ENCODE measurements at regions of chr4 and their contacts with region 1.

Region 1: GRCh38 chr4:182806259-182807252 is 110.6 kb downstream of the DCTD start:
- DNase-seq: peak in 8 of 9 experiments; percentile 31 to 74 (median 64)
- ATAC-seq: peak; percentile 43
- H3K4me3 ChIP-seq: peak overlapping the region; percentile 36
- H3K4me3 Mint-ChIP-seq: peak overlapping the region; percentile 70
- H3K27ac ChIP-seq: no peak overlapping the region
- H3K27ac Mint-ChIP-seq: no peak overlapping the region
- H3K4me1 ChIP-seq: peaks cover 21% of the 10 kb centered on the region
- H3K4me1 Mint-ChIP-seq: peaks cover 15% of the 10 kb centered on the region
- H3K27me3 ChIP-seq: peaks cover 0 to 6% of the 10 kb centered on the region in 2 experiments
- H3K27me3 Mint-ChIP-seq: peaks cover 8% of the 10 kb centered on the region
- CTCF ChIP-seq: peak; percentile 56

Region 2: GRCh38 chr4:182478475-182478874 is 328.1 kb before region 1 on chr4:
- CTCF ChIA-PET with region 1: no interaction called
- POLR2A ChIA-PET with region 1: no interaction called
- intact Hi-C with region 1: loop called (anchors 5 kb)
- DNase-seq: peak in 2 of 9 experiments; percentile 21 to 38
- ATAC-seq: no peak
- H3K4me3 ChIP-seq: no peak overlapping the region
- H3K4me3 Mint-ChIP-seq: no peak overlapping the region
- H3K27ac ChIP-seq: no peak overlapping the region
- H3K27ac Mint-ChIP-seq: no peak overlapping the region
- H3K4me1 ChIP-seq: no peaks in the 10 kb centered on the region
- H3K4me1 Mint-ChIP-seq: no peaks in the 10 kb centered on the region
- H3K27me3 ChIP-seq: no peaks in the 10 kb centered on the region
- H3K27me3 Mint-ChIP-seq: no peaks in the 10 kb centered on the region
- CTCF ChIP-seq: peak; percentile 78

Region 3: DNA sequence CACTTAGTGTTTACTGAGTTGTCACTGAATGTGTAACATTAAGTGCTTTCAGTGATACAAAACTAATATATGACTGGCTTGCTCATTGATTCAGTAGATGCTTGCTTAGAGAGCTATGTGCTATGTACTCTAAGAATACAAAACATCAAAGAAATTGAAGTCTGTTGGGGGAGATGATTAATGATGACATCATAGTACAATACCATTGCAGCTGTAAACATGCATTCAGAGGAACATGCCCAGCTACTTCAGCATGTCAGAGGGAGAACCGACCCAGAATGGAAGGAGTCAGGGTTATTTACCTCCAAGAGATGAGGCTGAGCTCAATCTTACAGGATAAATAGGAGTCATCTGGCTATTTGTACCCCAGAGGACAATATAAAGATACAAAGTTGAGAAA is 272.6 kb before region 1 on chr4:
- CTCF ChIA-PET with region 1: no interaction called
- POLR2A ChIA-PET with region 1: no interaction called
- intact Hi-C with region 1: no loop called
- DNase-seq: no peak
- ATAC-seq: no peak
- H3K4me3 ChIP-seq: no peak overlapping the region
- H3K4me3 Mint-ChIP-seq: no peak overlapping the region
- H3K27ac ChIP-seq: no peak overlapping the region
- H3K27ac Mint-ChIP-seq: no peak overlapping the region
- H3K4me1 ChIP-seq: no peaks in the 10 kb centered on the region
- H3K4me1 Mint-ChIP-seq: no peaks in the 10 kb centered on the region
- H3K27me3 ChIP-seq: no peaks in the 10 kb centered on the region
- H3K27me3 Mint-ChIP-seq: peaks cover 4% of the 10 kb centered on the region
- CTCF ChIP-seq: no peak

Region 4: GRCh38 chr4:183504064-183504929 is 697.7 kb after region 1 on chr4:
- CTCF ChIA-PET with region 1: no interaction called
- POLR2A ChIA-PET with region 1: no interaction called
- intact Hi-C with region 1: no loop called
- DNase-seq: peak; percentile 99 to 100 (median 99)
- ATAC-seq: peak; percentile 78
- H3K4me3 ChIP-seq: peak overlapping the region; percentile 95 to 98
- H3K4me3 Mint-ChIP-seq: peak overlapping the region; percentile 98
- H3K27ac ChIP-seq: peak overlapping the region; percentile 84 to 98
- H3K27ac Mint-ChIP-seq: peak overlapping the region; percentile 99
- H3K4me1 ChIP-seq: peaks cover 14% of the 10 kb centered on the region
- H3K4me1 Mint-ChIP-seq: peaks cover 34% of the 10 kb centered on the region
- H3K27me3 ChIP-seq: no peaks in the 10 kb centered on the region
- H3K27me3 Mint-ChIP-seq: no peaks in the 10 kb centered on the region
- CTCF ChIP-seq: no peak